ENCODE measurements at regions of chr2 and their contacts with region 1.

Region 1: GRCh38 chr2:240060977-240061591 is 7.8 kb upstream of the OR6B3 start:
- DNase-seq: peak; percentile 43
- H3K4me3 Mint-ChIP-seq: no peak overlapping the region
- H3K27ac Mint-ChIP-seq: no peak overlapping the region
- H3K4me1 Mint-ChIP-seq: no peaks in the 10 kb centered on the region
- H3K27me3 Mint-ChIP-seq: peaks cover 24% of the 10 kb centered on the region

Region 2: DNA sequence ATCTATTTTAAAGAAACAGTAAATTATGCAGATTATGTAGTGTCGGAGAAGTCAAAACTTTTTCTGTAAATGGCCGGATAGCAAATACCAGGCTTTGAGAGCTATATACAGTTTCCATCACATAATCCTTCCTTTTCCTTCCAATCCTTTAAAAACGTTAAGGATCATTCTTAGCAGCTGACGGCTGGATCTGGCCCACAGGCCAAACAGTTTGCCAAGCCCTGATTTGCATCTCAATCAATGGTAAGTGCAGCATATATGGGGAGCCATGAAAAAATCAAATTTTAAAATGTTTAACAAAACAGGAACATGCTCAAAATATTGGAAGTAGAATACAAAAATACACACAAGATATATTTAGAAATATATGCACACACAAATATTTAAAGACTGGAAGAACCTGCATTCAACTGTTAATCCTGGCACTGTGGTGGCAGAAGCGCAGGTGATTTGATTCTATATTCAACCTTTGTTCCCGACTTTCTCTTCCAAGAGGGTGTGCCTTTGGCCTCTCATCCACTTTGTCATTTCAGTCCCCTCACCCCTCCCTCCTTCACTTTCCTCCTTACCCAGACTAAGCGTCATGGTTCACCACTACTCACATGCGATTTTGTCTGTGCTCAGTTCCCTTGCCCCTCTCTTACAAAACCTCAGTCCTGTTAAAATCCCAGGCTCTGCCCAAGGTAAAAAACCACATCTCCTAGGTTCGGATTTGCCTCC is 63.2 kb before region 1 on chr2:
- CTCF ChIA-PET with region 1: no interaction called
- POLR2A ChIA-PET with region 1: no interaction called
- DNase-seq: no peak
- H3K4me3 Mint-ChIP-seq: no peak overlapping the region
- H3K27ac Mint-ChIP-seq: no peak overlapping the region
- H3K4me1 Mint-ChIP-seq: no peaks in the 10 kb centered on the region
- H3K27me3 Mint-ChIP-seq: no peaks in the 10 kb centered on the region

Region 3: DNA sequence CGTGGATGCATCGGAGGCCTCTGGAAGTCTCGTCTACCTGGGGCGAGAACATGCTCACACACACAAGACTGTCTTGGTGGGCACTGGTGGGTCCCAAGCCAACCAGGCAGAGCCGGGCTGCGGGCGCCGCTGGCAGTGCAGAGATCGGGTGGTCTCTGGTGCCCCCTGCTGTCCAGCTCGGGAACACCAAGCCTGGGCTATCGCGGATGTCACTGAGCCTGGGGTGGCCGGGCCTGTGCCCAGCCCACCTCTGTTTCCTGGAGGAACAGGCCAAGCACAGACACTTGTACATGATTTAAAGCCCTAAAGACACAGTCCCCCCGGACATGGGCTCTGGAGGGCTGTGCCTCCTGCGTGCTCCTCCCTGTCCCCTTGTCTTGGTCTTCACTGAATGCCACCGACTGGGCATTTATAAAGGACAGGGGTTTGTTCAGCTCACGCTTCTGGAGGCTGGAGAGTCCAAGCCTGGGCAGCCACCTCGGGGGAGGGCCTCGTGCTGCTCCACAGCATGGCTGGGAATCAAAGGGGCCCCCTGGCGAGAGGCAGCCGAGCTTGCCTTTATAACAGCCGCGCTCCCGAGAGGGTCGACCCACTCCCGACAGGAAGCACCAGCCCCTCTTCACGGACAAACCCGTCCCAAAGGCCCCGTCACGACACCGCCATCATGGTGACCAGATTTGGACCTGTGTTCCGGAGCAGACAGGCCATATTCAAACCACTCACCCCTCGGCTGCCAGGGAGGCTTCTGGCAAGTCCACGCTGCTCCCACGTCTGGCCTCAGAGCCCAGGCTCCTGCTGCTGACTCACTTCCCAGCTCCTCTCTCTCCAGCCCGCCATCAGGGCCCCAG is 82.9 kb after region 1 on chr2:
- CTCF ChIA-PET with region 1: interaction called, 39 read pairs
- POLR2A ChIA-PET with region 1: no interaction called
- DNase-seq: peak; percentile 78
- H3K4me3 Mint-ChIP-seq: no peak overlapping the region
- H3K27ac Mint-ChIP-seq: no peak overlapping the region
- H3K4me1 Mint-ChIP-seq: no peaks in the 10 kb centered on the region
- H3K27me3 Mint-ChIP-seq: no peaks in the 10 kb centered on the region